Cardiac septum (tissue), 1 donor: ENCODE measurements at regions of chr14 and their contacts with region 1.

Region 1: GRCh38 chr14:58297762-58298476 is 436 bp upstream of the ARID4A start:
- DNase-seq: peak; percentile 99

Region 2: GRCh38 chr14:58152014-58152857 is 145.7 kb before region 1 on chr14 and contains the start of gene ARMH4:
- intact Hi-C with region 1: loop called (anchors 5 kb)
- DNase-seq: peak; percentile 90
- total RNA-seq, gene ARMH4: 6.4 TPM

Region 3: DNA sequence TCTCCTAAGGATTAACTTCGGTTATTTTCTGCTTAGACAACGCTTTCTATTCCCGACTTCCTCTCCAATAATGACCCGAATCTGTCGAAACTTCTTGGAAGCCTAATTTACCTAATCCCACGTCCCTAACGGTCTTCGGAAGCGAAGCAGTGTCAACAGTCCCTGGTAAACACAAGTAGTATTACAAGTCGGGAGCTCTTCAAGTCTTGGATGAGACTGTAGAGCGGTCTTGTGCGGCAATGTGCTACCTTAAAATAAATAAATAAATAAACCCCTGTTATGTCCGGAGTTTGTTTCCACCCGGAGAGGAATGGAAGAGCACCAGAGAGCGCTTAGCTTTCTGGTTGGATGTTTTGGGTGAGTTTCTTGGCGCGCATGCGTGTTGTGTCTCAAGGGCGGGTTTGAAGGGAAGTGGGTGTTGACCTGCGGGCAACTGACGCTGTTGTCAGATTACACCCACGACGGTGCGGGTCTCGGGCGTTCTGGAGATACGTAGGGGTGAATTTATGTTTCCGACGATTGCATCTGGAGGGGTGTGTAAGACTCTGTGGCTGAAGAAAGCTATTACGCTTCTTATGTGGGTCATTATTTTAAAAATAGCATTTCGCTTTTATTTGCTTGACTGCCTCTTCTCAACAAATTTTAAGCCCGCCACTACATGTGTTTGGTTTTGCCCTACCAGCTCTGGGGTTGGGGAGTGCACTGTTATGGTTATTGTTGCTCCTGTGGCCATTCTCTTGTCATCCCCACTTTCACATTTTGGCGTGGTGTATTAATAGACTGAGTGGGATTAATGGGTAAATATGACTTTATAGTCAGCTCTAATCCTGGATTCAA is 129.6 kb after region 1 on chr14 and contains the starts of genes KIAA0586 and TIMM9:
- intact Hi-C with region 1: loop called (anchors 2 kb)
- DNase-seq: peak; percentile 97
- total RNA-seq, gene KIAA0586: 17.0 TPM
- total RNA-seq, gene TIMM9: 26.6 TPM